HepG2 (cell line): ENCODE measurements at regions of chr16 and their contacts with region 1.

Region 1: DNA sequence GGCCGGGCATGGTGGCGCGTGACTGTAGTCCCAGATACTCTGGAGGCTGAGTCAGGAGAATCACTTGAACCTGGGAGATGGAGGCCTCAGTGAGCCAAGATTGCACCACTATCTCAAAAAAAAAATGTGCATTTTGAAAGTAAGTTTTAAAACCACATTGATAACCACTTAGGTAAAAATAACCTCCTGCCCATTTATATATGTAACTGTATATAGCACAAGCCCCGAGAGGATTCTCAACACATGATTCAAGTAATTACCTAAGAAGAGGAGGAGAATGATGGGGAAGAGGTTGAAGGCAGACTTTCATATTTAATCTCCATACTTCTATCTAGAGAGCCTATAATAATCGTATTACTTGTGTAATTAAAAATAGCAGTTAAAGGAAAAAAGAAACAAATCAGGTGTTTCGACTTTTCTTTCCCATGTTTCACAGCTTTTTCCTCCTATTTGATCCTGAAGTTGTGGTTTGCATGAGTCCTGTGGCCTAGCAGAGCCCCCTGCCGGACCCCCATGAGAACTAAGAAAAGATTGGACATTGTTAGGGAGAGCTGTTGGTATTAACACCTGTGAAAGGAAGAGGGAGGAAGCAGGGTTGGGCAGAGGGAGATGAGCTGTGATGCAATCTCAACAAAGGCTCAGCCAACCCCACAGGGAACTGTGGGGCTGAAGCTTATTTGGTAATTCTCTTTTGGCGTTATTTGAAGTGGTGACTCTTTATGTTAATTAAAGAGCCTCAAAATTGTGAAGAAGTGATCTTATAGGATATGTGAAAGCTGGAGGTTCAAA is 22.1 kb downstream of the PMFBP1 start:
- DNase-seq: peak; percentile 50
- ATAC-seq: peak; percentile 93
- H3K4me3 ChIP-seq: no peak overlapping the region
- H3K27ac ChIP-seq: no peak overlapping the region
- H3K4me1 ChIP-seq: no peaks in the 10 kb centered on the region
- H3K27me3 ChIP-seq: no peaks in the 10 kb centered on the region; a peak in 1 of 5 replicates
- CTCF ChIP-seq: peak; percentile 67
- EP300 ChIP-seq: no peak
- POLR2A ChIP-seq: no peak
- RAD21 ChIP-seq: peak; percentile 43; the same call in 1 of the 2 replicates

Region 2: GRCh38 chr16:72112906-72113615 is 36.8 kb before region 1 on chr16:
- CTCF ChIA-PET with region 1: no interaction called
- POLR2A ChIA-PET with region 1: no interaction called
- in situ Hi-C with region 1: no loop called
- intact Hi-C with region 1: no loop called
- DNase-seq: no peak
- ATAC-seq: peak; percentile 26; the same call in 2 of the 3 replicates
- H3K4me3 ChIP-seq: no peak overlapping the region
- H3K27ac ChIP-seq: no peak overlapping the region
- H3K4me1 ChIP-seq: no peaks in the 10 kb centered on the region
- H3K27me3 ChIP-seq: no peaks in the 10 kb centered on the region
- CTCF ChIP-seq: no peak
- EP300 ChIP-seq: no peak
- POLR2A ChIP-seq: no peak
- RAD21 ChIP-seq: no peak

Region 3: DNA sequence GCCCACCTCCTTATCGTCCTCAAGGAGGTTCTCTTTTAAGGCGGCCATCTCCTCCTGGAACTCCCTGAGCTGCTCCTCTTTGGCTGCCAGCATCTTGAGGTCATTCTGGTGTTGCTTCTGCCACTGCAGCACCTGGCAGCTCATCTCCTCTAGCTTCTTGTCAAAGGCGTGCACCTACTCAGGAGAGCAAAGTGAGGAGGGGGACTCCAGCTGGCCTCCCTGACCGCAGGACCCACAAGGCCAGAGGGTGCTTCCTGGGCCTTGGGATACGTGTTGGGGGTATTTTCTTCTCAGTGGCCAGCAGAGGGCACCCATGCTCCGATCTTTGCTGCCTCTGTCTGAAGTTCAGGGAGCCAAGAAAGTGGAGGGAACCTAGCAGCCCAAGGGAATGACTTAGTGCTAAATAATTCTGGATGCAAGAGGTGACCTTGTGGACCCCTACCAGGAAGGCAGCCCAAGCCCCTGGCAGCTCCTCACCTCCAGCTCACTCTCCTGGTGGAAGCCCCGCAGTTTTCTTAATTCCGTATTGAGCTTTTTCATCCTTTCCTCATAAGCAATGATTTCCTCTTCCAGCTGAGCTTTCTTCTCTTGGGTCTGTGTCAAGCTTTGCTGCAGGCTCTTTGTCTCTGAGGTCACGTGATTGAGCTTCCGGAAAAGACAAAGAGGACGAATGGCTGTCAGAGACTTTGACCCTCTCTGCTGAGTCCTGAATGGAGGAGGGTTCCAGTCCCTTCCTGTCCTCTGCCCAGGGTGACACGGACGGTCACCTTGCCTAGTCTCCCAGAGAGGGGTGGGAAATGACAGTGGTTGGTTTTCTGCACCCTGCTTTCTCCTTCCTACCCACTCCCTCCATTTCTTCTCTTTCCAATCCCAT is 24.9 kb before region 1 on chr16:
- CTCF ChIA-PET with region 1: interaction called, 27 read pairs
- POLR2A ChIA-PET with region 1: no interaction called
- in situ Hi-C with region 1: no loop called
- intact Hi-C with region 1: loop called (anchors 1 kb)
- DNase-seq: peak; percentile 67
- ATAC-seq: peak; percentile 90
- H3K4me3 ChIP-seq: 0 out of 6 replicates have a peak overlapping the region, but pooled peaks of 1 of the 3 experiments have one; percentile 6
- H3K27ac ChIP-seq: peak overlapping the region; percentile 53
- H3K4me1 ChIP-seq: peaks cover 26% of the 10 kb centered on the region
- H3K27me3 ChIP-seq: no peaks in the 10 kb centered on the region
- CTCF ChIP-seq: peak; percentile 95
- EP300 ChIP-seq: peak in 1 of 2 experiments; percentile 17; a peak in 1 of 4 replicates
- POLR2A ChIP-seq: no peak
- RAD21 ChIP-seq: peak; percentile 81